ENCODE measurements at regions of chr15 and their contacts with region 1.

Region 1: DNA sequence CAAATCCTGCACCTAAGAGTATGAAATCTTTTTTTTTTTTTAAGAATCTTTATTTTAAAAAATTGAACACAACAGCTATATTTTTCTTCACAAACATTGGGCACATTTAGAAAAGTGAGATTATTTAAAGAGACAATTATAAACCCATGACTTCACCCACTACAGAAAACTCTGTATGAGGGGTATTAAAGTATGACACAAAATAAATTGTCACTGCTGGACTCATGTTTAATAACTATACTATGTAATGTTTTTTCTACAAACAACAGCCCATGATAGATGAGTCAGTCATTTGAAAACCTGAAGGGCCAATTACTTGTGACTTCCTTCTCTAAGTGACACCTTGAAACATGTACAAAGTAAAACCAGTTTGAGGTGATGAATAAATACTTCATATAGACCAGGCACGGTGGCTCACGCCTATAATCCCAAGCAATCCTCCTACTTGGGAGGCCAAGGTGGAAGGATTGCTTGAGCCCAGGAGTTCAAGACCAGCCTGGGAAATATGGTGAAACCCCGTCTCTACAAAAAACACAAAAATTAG is 36.0 kb downstream of the AQR start:
- DNase-seq: no peak
- ATAC-seq: no peak

Region 2: DNA sequence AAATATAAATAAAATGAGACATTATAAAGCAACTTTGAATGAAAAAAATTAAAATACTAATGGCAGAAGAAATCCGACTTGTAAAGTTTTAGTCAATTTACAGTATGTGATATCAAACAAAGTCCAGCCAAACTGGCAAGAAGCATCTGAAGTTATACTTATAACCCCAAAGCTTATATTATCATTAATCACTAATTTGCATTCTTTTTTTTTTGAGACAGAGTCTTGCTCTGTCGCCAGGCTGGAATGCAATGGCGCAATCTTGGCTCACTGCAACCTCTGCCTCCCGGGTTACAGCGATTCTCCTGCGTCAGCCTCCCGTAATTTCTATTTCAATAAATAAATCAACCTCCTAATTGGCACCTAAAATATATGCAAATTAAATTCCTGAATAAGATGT is 44.0 kb before region 1 on chr15:
- intact Hi-C with region 1: loop called (anchors 10 kb)
- DNase-seq: no peak
- ATAC-seq: no peak

Measured in Right ventricle myocardium inferior (tissue), 1 donor.